HEK293 (cell line): ENCODE measurements at regions of chr4 and their contacts with region 1.

Region 1: DNA sequence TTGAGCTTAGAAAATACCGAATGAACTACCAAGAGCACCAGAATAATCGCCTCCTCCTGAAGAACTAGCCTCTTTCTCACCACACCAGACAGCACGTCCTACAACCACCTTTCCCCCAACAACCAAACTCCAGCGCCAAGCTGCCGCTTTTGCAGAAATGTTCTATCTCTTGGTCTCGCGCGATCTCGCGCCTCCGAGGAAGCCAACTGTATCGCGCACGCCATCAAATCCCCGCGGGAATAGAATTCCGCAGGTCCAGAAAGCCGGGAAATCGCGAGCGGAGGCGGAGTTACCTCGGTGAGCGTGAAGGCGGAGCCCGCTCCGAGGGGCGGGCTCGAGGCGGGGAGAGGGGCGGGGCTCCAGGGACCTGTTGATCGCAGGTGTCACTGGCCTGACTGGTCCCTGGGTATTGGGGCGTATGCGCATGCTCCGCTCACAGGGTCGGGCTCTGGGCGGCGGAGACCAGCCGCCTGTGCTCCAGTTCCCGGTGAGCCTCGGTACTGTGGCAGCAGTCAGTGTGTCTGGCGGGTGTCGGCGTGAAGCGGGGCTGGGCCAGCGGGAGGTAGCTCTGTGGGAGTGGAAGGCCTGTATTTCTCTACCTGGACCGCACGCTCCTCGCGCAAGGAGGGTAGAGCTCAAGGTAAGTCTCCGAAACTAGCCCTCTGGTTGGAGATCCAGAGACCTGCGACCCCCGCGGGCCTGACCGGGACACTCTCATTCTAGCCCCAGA is at the start of gene USP53:
- H3K4me3 ChIP-seq: peak within 1 kb of the TSS; percentile 83
- H3K27ac ChIP-seq: peak within 1 kb of the TSS; percentile 78
- H3K4me1 ChIP-seq: no peaks in the 10 kb centered on the region
- CTCF ChIP-seq: no peak

Region 2: DNA sequence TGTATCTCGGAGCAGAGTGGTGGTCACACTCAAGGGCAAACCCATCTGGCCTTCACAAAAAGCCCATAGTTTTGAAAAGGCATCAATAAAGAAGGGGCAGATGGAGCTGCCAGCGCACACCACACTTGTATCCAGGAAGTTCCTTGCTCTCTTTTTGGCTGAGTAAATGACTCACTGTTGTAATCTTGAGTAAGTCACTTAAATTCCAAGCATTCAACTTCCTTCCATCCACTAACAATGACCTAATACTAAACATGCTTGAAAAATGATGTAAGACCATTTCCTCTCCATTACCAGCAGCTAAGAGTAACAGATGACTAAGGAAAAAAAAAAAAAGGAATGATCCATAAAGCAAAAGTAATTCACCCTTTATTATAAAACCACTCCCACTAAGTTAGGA is 109.1 kb before region 1 on chr4:
- CTCF ChIA-PET with region 1: no interaction called
- POLR2A ChIA-PET with region 1: interaction called, 11 read pairs
- H3K4me3 ChIP-seq: no peak overlapping the region
- H3K27ac ChIP-seq: no peak overlapping the region
- H3K4me1 ChIP-seq: no peaks in the 10 kb centered on the region
- CTCF ChIP-seq: no peak

Region 3: DNA sequence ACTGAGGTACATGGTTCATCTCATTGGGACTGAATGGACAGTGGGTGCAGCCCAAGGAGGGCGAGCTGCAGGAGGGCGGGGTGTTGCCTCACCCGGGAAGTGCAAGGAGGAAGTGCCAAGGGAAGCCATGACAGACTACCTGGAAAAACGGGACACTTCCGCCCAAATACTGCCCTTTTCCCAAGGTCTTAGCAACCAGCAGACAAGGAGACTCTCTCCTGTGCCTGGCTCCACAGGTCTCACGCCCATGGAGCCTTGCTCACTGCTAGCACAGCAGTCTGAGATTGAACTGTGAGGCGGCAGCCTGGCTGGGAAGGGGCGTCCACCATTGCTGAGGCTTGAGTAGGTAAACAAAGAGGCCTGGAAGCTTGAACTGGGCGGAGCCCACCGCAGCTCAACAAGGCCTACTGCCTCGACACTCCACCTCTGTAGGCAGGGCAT is 14.6 kb before region 1 on chr4:
- CTCF ChIA-PET with region 1: no interaction called
- POLR2A ChIA-PET with region 1: no interaction called
- H3K4me3 ChIP-seq: no peak overlapping the region
- H3K27ac ChIP-seq: no peak overlapping the region
- H3K4me1 ChIP-seq: no peaks in the 10 kb centered on the region
- CTCF ChIP-seq: no peak

Region 4: GRCh38 chr4:119300101-119300978 is 87.9 kb after region 1 on chr4:
- CTCF ChIA-PET with region 1: no interaction called
- POLR2A ChIA-PET with region 1: interaction called, 13 read pairs
- H3K4me3 ChIP-seq: peak overlapping the region; percentile 51
- H3K27ac ChIP-seq: peak overlapping the region; percentile 67
- H3K4me1 ChIP-seq: peaks cover 5% of the 10 kb centered on the region; the same call in 1 of the 2 replicates
- CTCF ChIP-seq: 0 out of 2 replicates have a peak, but pooled peaks have one; percentile 14